ENCODE measurements at regions of chr1 and their contacts with region 1.

Region 1: DNA sequence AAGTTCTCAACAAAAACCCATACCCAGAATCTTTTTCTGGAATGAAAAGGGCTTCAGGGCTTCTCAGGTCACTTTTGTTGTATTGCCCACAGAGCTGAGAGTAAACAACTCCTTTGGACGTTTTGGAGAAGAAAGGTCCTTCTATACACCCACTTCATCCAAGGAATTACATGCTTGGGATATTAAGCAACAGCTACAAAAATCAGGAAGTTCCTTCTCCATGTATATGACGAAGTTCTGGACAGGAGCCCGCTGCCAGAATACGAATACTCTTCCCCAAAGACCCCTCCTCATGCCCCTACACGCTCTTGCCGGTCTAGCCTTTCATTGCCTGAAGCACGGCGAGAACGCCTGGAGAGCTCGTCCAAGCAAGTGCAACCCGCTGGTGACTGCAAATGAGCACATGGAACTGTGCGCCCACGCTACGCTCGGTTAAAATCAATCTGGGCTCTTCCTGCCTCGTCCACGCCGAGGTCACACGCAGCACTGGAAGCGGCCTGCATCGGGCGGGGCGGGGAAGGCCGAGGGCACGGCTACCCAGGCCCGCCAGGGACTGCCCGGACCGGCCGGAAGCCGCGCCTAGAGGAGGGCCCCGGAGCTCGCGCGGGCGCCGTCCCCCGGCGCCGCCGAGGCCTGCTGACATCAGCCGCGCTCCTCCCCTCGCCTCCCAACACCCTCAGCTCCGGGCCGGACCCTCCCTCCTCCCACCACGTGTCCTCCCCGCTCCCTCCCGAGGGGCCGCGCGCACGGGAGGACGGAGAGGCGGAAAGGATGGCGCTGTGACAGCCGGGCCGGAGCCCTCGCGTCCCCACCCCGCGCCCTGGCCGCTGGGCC is at the start of gene POGK:
- DNase-seq: peak; percentile 93

Region 2: GRCh38 chr1:166827426-166827825 is 11.6 kb before region 1 on chr1:
- CTCF ChIA-PET with region 1: no interaction called
- POLR2A ChIA-PET with region 1: interaction called, 11 read pairs
- DNase-seq: no peak

Region 3: DNA sequence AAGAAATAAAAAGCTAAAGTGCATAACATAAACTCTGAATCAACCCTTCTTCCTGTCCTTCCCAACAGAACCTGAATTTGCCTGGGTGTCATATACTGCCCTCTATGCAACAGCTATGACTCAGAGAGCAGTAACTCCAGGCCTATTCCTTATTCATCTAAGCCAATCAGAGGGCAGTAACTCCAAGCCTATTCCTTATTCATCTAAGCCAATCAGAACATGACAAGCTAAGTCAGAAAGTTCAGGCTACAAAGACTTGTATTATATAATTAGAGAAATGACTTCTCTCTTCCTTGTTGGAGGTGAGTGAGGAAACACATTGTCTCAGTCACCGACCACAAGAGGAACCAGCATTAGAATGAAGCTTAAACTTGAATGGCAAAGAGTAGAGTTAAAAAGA is 63.3 kb after region 1 on chr1:
- CTCF ChIA-PET with region 1: no interaction called
- POLR2A ChIA-PET with region 1: no interaction called
- DNase-seq: no peak

Measured in HEK293T (cell line).